ENCODE measurements at regions of chr7 and their contacts with region 1.

Region 1: GRCh38 chr7:112707655-112708054 is 82.5 kb downstream of the TMEM168 start:
- DNase-seq: no peak
- ATAC-seq: peak; percentile 45; the same call in 2 of the 3 replicates
- H3K4me3 ChIP-seq: no peak overlapping the region
- H3K27ac ChIP-seq: no peak overlapping the region
- H3K4me1 ChIP-seq: no peaks in the 10 kb centered on the region
- H3K27me3 ChIP-seq: no peaks in the 10 kb centered on the region
- CTCF ChIP-seq: no peak
- EP300 ChIP-seq: no peak
- POLR2A ChIP-seq: no peak
- RAD21 ChIP-seq: no peak

Region 2: GRCh38 chr7:113033959-113034358 is 326.3 kb after region 1 on chr7:
- CTCF ChIA-PET with region 1: no interaction called
- POLR2A ChIA-PET with region 1: no interaction called
- RAD21 ChIA-PET with region 1: no interaction called
- SMC1A ChIA-PET with region 1: interaction called, 3 read pairs
- in situ Hi-C with region 1: no loop called
- intact Hi-C with region 1: loop called (anchors 10 kb)
- DNase-seq: no peak
- ATAC-seq: no peak
- H3K4me3 ChIP-seq: no peak overlapping the region
- H3K27ac ChIP-seq: no peak overlapping the region
- H3K4me1 ChIP-seq: no peaks in the 10 kb centered on the region
- H3K27me3 ChIP-seq: no peaks in the 10 kb centered on the region
- CTCF ChIP-seq: no peak
- EP300 ChIP-seq: no peak
- POLR2A ChIP-seq: no peak
- RAD21 ChIP-seq: no peak